ENCODE measurements at regions of chr22 and their contacts with region 1.

Region 1: GRCh38 chr22:37260901-37261336 is 16.9 kb upstream of the RAC2 start:
- DNase-seq: peak; percentile 45
- ATAC-seq: peak; percentile 72
- H3K4me3 ChIP-seq: no peak overlapping the region
- H3K27ac ChIP-seq: no peak overlapping the region
- H3K4me1 ChIP-seq: peaks cover 21 to 33% of the 10 kb centered on the region in 2 experiments
- H3K27me3 ChIP-seq: no peaks in the 10 kb centered on the region
- CTCF ChIP-seq: peak; percentile 85 to 92 (median 92)
- POLR2A ChIP-seq: no peak
- RAD21 ChIP-seq: peak; percentile 76

Region 2: GRCh38 chr22:36781656-36782627 is 479.0 kb before region 1 on chr22:
- CTCF ChIA-PET with region 1: interaction called, 4 read pairs
- POLR2A ChIA-PET with region 1: no interaction called
- RAD21 ChIA-PET with region 1: no interaction called
- intact Hi-C with region 1: loop called (anchors 5 kb)
- DNase-seq: peak; percentile 57
- ATAC-seq: peak; percentile 95
- H3K4me3 ChIP-seq: peak overlapping the region in 1 of 2 experiments; percentile 1; a peak in 1 of 4 replicates
- H3K27ac ChIP-seq: peak overlapping the region; percentile 14; the same call in 1 of the 2 replicates
- H3K4me1 ChIP-seq: peaks cover 2 to 13% of the 10 kb centered on the region in 2 experiments; a peak in 3 of 4 replicates
- H3K27me3 ChIP-seq: no peaks in the 10 kb centered on the region
- CTCF ChIP-seq: peak; percentile 86 to 96 (median 93)
- POLR2A ChIP-seq: no peak
- RAD21 ChIP-seq: peak; percentile 93

Region 3: DNA sequence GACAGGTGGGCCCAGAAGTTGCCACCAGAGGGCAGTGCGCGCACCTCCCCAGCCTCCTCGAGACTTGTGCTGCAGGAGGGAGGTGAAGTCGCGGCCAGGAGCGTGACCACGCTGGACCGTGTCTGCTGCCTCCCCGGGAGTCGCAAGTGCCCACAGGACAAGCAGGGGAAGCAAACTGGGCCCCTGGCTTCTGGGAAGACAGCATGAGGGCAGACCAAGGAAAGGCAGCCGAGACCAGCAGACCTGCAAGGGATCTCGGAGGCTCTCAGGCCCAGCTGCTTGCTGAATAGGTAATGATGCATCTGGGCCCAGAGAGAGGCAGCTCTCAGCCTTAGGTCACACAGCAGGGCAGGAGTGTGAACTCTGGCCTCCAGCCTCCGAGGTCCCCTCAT is 94.2 kb before region 1 on chr22:
- CTCF ChIA-PET with region 1: interaction called, 4 read pairs
- POLR2A ChIA-PET with region 1: no interaction called
- RAD21 ChIA-PET with region 1: no interaction called
- intact Hi-C with region 1: loop called (anchors 1 kb)
- DNase-seq: no peak
- ATAC-seq: peak; percentile 97
- H3K4me3 ChIP-seq: peak overlapping the region in 1 of 2 experiments; percentile 36; a peak in 1 of 4 replicates
- H3K27ac ChIP-seq: no peak overlapping the region; the same call in 1 of the 2 replicates
- H3K4me1 ChIP-seq: peaks cover 0 to 21% of the 10 kb centered on the region in 2 experiments; a peak in 2 of 4 replicates
- H3K27me3 ChIP-seq: no peaks in the 10 kb centered on the region
- CTCF ChIP-seq: peak; percentile 92 to 94 (median 93)
- POLR2A ChIP-seq: no peak
- RAD21 ChIP-seq: peak; percentile 94

Region 4: DNA sequence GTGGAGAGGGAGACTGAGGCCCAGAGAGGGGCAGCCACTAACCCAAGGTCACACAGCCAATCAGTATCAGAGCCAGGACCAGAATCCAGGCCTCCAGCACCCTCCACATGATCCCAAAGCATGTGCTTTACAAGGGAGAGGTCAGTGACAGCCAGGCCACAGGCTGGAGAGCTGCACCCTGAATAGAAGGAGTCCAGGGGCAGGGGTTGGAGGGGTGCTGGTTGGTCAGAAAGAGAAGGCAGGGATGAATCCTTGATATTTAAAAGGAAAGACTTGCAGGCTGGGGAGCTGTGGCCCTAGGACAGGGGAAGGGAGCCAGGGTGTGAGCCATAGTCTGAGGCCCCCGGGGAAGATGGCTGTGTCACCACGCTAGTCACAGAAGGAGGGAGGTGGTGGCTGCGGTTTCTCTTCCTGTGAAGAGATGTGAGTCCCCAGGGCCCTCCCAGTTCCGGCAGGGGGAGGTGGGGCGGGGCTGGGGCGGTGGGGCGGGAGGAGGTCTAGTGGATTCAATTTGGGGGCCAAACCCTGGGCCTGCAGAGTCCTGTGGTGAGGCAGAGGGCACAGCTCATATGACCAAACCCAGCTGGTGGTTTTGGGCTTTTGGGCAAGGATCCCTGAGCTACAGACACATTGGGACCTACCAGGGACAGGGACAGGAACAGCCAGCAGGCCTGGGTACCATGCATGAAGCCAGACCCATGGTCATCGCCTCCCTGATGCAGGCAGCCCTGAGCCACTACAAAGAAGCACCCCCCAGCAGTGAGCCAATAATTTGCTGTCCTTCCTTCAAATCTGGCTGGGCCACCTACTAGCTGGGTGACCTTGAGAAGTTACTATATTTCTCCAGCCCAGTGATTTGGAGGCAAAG is 30.9 kb before region 1 on chr22:
- CTCF ChIA-PET with region 1: interaction called, 16 read pairs
- POLR2A ChIA-PET with region 1: no interaction called
- RAD21 ChIA-PET with region 1: interaction called in 1 of 2 experiments, 3 read pairs
- intact Hi-C with region 1: no loop called
- DNase-seq: peak; percentile 51
- ATAC-seq: peak; percentile 76
- H3K4me3 ChIP-seq: peak overlapping the region in 1 of 2 experiments; percentile 48; a peak in 2 of 4 replicates
- H3K27ac ChIP-seq: peak overlapping the region; percentile 55
- H3K4me1 ChIP-seq: peaks cover 24 to 41% of the 10 kb centered on the region in 2 experiments
- H3K27me3 ChIP-seq: no peaks in the 10 kb centered on the region
- CTCF ChIP-seq: no peak
- POLR2A ChIP-seq: no peak
- RAD21 ChIP-seq: no peak

Region 5: DNA sequence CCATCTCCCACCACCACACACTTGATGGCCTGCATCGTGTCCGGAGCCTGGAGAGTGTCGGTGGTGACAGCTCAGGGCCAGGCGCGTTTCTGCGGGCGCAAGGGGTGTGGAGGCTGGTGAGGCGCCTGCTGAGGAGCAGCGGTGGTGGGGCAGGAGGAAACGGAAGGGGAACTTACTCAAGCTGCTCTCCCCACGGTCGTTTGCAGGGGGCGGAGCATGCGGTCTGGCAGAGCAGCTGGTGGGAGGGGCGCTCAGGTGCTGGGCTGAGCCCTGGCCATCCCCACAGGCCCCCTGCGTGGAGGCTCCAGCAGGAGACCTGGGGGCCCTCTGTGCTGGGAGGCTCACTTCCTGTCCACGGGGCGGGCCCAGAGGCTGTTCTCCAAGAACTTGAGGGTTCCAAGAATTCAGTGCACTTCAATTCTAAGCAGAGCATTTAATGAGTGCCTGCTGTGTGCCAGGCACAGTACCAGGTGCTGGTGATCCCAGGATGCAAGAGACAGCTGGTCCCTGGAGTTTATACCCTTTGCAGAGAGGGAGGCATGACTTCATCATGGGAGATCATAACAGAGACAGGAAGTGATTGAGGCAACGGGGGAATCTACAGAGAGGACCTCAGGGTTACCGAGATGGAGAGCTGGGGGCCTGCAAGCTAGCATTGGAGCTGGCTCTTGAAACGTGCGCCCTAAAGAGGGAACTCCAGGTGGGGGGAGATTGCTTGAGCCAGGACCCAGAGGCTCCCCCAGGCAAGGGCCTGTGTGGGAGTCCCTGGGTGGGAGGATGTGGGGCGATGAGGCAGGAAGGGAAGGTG is 16.6 kb before region 1 on chr22 and contains the start of gene RAC2:
- CTCF ChIA-PET with region 1: interaction called, 30 read pairs
- POLR2A ChIA-PET with region 1: interaction called, 6 read pairs
- RAD21 ChIA-PET with region 1: no interaction called
- intact Hi-C with region 1: no loop called
- DNase-seq: peak; percentile 51
- ATAC-seq: peak; percentile 92
- H3K4me3 ChIP-seq: peak within 1 kb of the TSS; percentile 71 to 97
- H3K27ac ChIP-seq: peak within 1 kb of the TSS; percentile 54; the same call in 1 of the 2 replicates
- H3K4me1 ChIP-seq: peaks cover 11 to 35% of the 10 kb centered on the region in 2 experiments
- H3K27me3 ChIP-seq: no peaks in the 10 kb centered on the region
- CTCF ChIP-seq: no peak
- POLR2A ChIP-seq: no peak
- RAD21 ChIP-seq: no peak
- total RNA-seq, gene RAC2: 62.0 TPM

Region 6: DNA sequence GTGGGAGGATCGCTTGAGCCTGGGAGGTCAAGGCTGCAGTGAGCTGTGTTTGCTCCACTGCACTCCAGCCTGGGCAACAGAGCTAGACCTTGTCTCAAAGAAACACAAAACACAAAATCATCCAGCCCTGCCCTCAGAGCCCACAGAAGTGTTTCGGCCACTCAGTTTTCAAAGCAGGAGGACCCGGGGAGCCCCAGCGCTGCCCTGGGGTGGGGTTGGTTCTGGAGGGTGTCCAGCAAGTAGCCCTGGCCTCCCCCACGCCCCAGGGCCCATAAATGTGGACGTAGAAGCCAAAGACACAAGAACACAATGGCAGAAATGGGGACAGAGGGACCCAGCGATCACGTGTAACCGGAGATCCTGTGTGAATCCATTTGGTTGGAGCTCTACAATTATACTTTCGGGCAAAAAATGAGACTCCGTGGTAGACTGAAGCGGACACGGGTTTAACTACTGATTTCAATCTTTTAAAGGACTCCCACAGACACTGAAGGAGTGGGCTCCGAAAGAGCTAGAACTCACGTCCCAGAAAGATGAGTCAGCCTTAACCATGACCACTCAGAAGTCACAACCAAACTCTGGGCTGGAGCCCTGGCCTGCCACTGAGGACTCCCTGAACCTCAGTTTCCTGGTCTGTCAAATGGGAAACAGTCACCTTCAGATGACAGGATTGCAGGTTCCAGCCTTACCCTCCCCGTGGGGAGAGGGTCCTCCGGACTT is 12.4 kb after region 1 on chr22:
- CTCF ChIA-PET with region 1: interaction called, 44 read pairs
- POLR2A ChIA-PET with region 1: interaction called, 3 read pairs
- RAD21 ChIA-PET with region 1: no interaction called
- intact Hi-C with region 1: no loop called
- DNase-seq: no peak
- ATAC-seq: peak; percentile 48
- H3K4me3 ChIP-seq: no peak overlapping the region
- H3K27ac ChIP-seq: peak overlapping the region; percentile 25; the same call in 1 of the 2 replicates
- H3K4me1 ChIP-seq: peaks cover 30 to 73% of the 10 kb centered on the region in 2 experiments
- H3K27me3 ChIP-seq: no peaks in the 10 kb centered on the region
- CTCF ChIP-seq: no peak
- POLR2A ChIP-seq: no peak
- RAD21 ChIP-seq: no peak

Region 7: GRCh38 chr22:37353839-37354238 is 92.9 kb after region 1 on chr22:
- CTCF ChIA-PET with region 1: no interaction called
- POLR2A ChIA-PET with region 1: no interaction called
- RAD21 ChIA-PET with region 1: no interaction called
- intact Hi-C with region 1: no loop called
- DNase-seq: no peak
- ATAC-seq: no peak
- H3K4me3 ChIP-seq: no peak overlapping the region
- H3K27ac ChIP-seq: no peak overlapping the region
- H3K4me1 ChIP-seq: peaks cover 0 to 11% of the 10 kb centered on the region in 2 experiments; a peak in 2 of 4 replicates
- H3K27me3 ChIP-seq: no peaks in the 10 kb centered on the region
- CTCF ChIP-seq: no peak
- POLR2A ChIP-seq: no peak
- RAD21 ChIP-seq: no peak

Region 8: GRCh38 chr22:37457093-37457893 is 196.4 kb after region 1 on chr22:
- CTCF ChIA-PET with region 1: interaction called, 29 read pairs
- POLR2A ChIA-PET with region 1: no interaction called
- RAD21 ChIA-PET with region 1: no interaction called
- intact Hi-C with region 1: loop called (anchors 2 kb)
- DNase-seq: peak; percentile 79
- ATAC-seq: peak; percentile 87
- H3K4me3 ChIP-seq: no peak overlapping the region
- H3K27ac ChIP-seq: peak overlapping the region; percentile 96
- H3K4me1 ChIP-seq: peaks cover 49 to 59% of the 10 kb centered on the region in 2 experiments
- H3K27me3 ChIP-seq: no peaks in the 10 kb centered on the region; the same call in 1 of the 2 replicates
- CTCF ChIP-seq: peak; percentile 97 to 99 (median 98)
- POLR2A ChIP-seq: no peak
- RAD21 ChIP-seq: peak; percentile 100

Measured in HCT116 (cell line).